PC-9 (cell line): ENCODE measurements at regions of chr17 and their contacts with region 1.

Region 1: DNA sequence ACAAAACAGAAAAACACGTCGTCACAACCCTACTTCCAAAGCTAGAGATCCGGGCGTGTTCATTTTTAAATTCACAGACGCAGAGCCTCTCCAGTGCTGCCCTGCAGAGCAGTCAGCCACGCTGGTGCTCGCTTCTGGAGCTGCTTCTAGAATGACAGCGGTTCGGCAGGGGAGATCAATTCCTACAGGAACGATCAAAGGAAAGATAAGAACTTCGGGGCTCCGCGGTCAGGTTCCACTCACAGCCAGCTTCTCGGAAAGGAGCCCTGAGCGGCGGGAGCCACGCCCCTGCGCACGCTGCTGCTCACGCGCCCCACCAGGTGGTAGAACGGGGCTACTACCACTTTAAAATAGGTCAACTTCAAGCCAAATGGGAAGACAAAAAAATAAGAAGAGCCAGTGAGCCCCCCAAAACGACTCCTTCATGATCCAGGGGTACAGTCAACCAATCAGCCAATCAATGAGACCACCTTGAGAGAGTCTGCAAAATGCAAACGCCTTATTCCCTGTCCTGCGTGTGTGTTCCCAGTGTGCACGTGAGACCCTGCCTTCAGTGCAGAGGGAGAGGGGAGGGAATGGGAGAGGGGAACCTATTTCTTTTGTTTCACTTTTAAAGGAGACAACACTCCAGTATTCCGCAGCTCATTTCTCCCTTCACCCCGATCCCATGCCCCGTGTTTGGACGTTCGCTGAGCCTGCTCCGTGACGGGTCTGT is 209.7 kb downstream of the RBFOX3 start:
- DNase-seq: peak in 1 of 2 experiments; percentile 57
- H3K4me3 ChIP-seq: no peak overlapping the region
- H3K27ac ChIP-seq: no peak overlapping the region
- H3K4me1 ChIP-seq: no peaks in the 10 kb centered on the region
- H3K27me3 ChIP-seq: peaks cover 59% of the 10 kb centered on the region
- CTCF ChIP-seq: peak; percentile 72

Region 2: DNA sequence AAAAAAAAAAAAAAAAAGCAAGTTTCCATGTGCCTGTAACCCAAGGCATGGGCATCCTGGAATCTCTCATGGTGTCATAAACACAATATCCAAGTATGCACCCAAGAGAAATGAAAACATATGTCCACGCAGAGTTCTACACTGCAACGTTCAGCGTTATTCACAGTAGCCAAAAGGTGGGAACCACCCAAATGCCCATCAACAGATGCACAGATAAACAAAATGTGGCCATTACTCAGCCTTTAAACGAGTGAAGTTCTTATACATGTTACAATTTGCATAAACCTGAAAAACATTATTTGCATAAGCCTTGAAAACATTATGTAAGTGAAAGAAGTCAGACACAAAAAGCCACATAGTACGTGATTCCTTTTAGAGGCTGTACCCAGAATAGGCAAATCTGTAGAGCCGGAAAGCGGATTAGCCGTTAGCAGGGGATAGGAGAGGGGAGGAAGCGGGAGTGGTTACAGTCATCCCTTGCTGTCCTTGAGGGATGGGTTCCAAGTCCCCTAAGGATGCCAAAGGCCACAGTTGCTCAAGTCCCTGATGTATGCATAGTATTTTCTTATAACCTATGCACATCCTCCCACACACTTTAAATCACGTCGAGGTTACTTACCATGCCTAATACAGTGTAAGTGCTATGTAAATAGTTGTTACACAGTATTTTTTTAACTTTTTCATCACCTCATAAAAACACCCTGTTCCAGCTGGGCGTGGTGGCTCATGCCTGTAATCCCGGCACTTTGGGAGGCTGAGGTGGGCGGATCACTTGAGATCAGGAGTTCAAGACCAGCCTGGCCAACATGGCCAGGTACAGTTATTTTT is 776.6 kb before region 1 on chr17:
- CTCF ChIA-PET with region 1: no interaction called
- POLR2A ChIA-PET with region 1: no interaction called
- intact Hi-C with region 1: no loop called
- DNase-seq: no peak
- H3K4me3 ChIP-seq: no peak overlapping the region
- H3K27ac ChIP-seq: no peak overlapping the region
- H3K4me1 ChIP-seq: no peaks in the 10 kb centered on the region
- H3K27me3 ChIP-seq: no peaks in the 10 kb centered on the region
- CTCF ChIP-seq: no peak

Region 3: GRCh38 chr17:79082311-79083190 is 318.6 kb before region 1 on chr17:
- CTCF ChIA-PET with region 1: interaction called, 11 read pairs
- POLR2A ChIA-PET with region 1: no interaction called
- intact Hi-C with region 1: no loop called
- DNase-seq: peak in 1 of 2 experiments; percentile 61
- H3K4me3 ChIP-seq: no peak overlapping the region
- H3K27ac ChIP-seq: no peak overlapping the region
- H3K4me1 ChIP-seq: no peaks in the 10 kb centered on the region
- H3K27me3 ChIP-seq: no peaks in the 10 kb centered on the region
- CTCF ChIP-seq: peak; percentile 80

Region 4: GRCh38 chr17:79231766-79232287 is 169.3 kb before region 1 on chr17:
- CTCF ChIA-PET with region 1: interaction called, 18 read pairs
- POLR2A ChIA-PET with region 1: no interaction called
- intact Hi-C with region 1: no loop called
- DNase-seq: no peak
- H3K4me3 ChIP-seq: no peak overlapping the region
- H3K27ac ChIP-seq: no peak overlapping the region
- H3K4me1 ChIP-seq: no peaks in the 10 kb centered on the region
- H3K27me3 ChIP-seq: peaks cover 88% of the 10 kb centered on the region
- CTCF ChIP-seq: no peak

Region 5: DNA sequence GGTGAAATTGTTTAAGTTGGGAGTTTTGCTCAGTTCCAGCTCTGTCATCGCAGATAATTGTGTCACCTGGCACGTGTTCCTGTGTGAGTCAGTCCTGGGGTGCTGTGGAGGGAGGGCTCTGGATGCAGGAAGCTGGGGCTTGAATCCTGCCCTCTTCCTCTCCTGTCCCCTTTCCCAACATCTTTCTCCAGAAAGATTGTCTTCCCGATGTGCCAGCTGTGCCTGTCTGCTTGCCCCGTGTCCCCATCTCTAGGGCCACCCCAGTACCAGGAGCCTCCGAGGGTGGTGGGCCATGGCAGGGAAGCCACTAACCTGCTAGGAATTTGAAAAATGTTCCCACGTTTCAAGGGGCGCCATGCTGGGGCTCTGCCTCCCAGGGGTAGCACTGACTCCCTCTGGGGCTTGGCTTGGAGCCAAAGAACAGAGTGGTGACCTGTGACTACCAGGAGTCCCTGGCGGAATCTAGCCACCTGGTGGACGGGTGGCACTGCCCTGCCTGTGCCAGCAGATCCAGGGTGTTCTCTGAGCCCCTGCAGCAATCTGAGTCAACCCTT is 128.4 kb before region 1 on chr17:
- CTCF ChIA-PET with region 1: no interaction called
- POLR2A ChIA-PET with region 1: no interaction called
- intact Hi-C with region 1: no loop called
- DNase-seq: peak; percentile 21 to 40
- H3K4me3 ChIP-seq: no peak overlapping the region
- H3K27ac ChIP-seq: no peak overlapping the region
- H3K4me1 ChIP-seq: no peaks in the 10 kb centered on the region
- H3K27me3 ChIP-seq: peaks cover 59% of the 10 kb centered on the region
- CTCF ChIP-seq: no peak

Region 6: DNA sequence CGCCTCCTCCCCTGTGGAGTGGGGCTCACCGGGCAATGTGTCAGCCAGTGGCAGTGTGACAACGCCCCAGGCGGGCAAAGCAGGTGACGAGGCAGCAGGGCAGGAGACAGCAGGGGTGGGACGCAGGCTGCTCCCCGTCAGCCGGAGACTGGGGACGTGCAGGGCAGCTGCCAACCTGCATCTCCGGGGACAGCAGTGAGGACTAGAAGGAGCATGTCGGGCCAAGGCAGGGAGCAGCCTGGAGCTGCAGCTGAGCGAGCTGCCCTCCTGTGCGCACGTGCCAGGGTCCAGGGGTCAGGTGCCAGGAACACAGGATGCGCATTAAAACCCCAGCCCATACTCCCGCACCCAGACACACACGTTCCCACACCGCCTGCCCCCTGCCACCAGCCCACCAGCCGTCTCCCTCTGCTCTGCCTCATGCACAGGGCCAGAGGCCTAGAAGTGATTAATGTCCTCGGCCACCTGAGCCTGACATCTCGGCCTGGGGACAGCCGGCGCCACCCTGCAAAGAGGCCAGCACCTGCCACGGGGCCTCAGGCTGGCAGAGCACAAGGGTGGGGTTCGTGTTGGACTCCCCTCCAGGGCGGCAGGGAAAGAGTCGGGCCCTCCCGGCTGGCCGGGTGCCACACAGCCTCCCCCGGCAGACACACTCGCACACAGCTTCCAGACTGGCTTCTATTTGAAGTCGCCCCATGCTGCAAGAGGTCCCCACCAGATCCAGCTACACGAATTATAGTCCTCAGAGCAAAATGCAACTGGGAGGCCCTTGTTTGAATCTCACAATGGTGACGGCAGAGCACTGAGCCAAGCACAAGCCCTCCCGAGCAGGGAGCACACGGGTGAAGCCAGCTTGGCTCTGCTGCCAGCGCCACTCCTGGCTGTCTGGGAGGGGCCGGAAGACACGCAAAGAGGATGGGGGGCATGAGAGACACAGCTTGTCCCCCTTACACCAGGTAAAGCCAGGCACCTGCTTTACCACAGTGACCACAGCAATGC is 119.3 kb after region 1 on chr17:
- CTCF ChIA-PET with region 1: no interaction called
- POLR2A ChIA-PET with region 1: no interaction called
- intact Hi-C with region 1: no loop called
- DNase-seq: no peak
- H3K4me3 ChIP-seq: no peak overlapping the region
- H3K27ac ChIP-seq: no peak overlapping the region
- H3K4me1 ChIP-seq: no peaks in the 10 kb centered on the region
- H3K27me3 ChIP-seq: peaks cover 100% of the 10 kb centered on the region
- CTCF ChIP-seq: no peak

Region 7: GRCh38 chr17:79549141-79549915 is 148.2 kb after region 1 on chr17:
- CTCF ChIA-PET with region 1: no interaction called
- POLR2A ChIA-PET with region 1: no interaction called
- intact Hi-C with region 1: no loop called
- DNase-seq: no peak
- H3K4me3 ChIP-seq: no peak overlapping the region
- H3K27ac ChIP-seq: no peak overlapping the region
- H3K4me1 ChIP-seq: no peaks in the 10 kb centered on the region
- H3K27me3 ChIP-seq: peaks cover 67% of the 10 kb centered on the region
- CTCF ChIP-seq: no peak